Left cardiac atrium (tissue), 4 donors: ENCODE measurements at regions of chr6 and their contacts with region 1.

Region 1: GRCh38 chr6:43070028-43070632 is 6.0 kb upstream of the PTK7 start:
- DNase-seq: no peak
- ATAC-seq: peak; percentile 41 to 60

Region 2: DNA sequence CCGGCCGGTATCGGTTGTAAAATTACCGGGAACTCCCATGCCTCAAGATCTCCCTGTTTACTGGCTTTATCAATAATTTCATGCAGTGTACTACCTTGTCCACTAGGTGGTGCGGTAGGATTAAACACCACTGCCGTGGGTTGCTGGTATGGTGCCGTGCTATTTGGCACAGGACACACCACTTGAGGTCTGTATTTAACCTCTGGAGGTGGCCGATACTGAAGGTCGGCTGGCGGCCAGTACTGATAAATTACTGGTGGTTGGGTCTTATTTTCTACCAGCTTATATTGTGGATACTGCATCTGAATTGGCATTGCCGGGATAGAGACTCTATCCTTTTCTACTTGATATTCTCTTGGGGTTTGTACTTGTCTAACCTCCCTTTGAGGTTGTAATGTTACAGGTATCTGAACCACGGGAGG is 168.6 kb before region 1 on chr6:
- intact Hi-C with region 1: no loop called
- DNase-seq: peak; percentile 87
- ATAC-seq: peak; percentile 97 to 98

Region 3: DNA sequence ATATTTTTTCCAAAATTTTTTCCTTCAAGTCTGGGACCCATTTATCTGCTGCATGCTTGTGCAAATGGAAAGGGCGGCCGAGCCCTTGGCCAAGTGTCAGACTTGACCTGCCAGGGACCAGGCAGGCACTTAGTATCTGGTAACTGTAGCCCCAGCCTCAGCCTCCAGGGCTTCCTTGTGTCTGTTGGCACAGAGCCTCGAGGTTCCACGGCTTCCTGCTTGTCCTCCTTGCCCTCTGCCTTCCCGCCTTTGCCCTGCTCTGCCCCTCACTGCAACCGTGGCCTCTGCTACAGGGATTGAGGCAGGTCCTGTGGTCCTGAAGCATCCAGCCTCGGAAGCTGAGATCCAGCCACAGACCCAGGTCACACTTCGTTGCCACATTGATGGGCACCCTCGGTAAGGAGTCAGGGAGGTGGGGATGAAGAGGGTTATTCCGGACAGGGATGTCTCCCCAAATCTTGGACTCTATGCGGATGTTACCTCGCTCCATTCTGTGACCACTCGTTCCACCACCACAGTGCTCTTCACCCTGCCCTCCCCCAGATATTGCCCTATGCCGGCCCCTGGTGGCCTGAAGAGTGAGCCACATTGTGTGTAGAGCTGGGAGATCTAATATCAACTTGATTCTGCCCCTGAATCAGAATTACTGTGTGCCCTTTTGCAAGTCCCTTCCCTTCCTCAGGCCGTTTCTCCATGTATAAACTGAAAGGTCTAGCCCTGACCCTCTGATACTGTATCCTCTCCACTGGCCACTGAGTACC is 59.5 kb after region 1 on chr6:
- intact Hi-C with region 1: loop called (anchors 10 kb)
- DNase-seq: no peak
- ATAC-seq: peak; percentile 64 to 80